GM12878 (cell line): ENCODE measurements at regions of chr10 and their contacts with region 1.

Region 1: GRCh38 chr10:88835096-88835909 is 16.3 kb downstream of the ANKRD22 start:
- DNase-seq: peak; percentile 59
- ATAC-seq: peak; percentile 96
- H3K4me3 ChIP-seq: no peak overlapping the region
- H3K27ac ChIP-seq: no peak overlapping the region
- H3K4me1 ChIP-seq: peaks cover 11% of the 10 kb centered on the region
- H3K27me3 ChIP-seq: no peaks in the 10 kb centered on the region
- CTCF ChIP-seq: peak; percentile 78 to 97 (median 91)
- EP300 ChIP-seq: no peak
- POLR2A ChIP-seq: no peak
- RAD21 ChIP-seq: peak; percentile 99

Region 2: GRCh38 chr10:88687853-88688467 is 147.3 kb before region 1 on chr10:
- CTCF ChIA-PET with region 1: interaction called, 16 read pairs
- POLR2A ChIA-PET with region 1: no interaction called
- RAD21 ChIA-PET with region 1: interaction called, 3 read pairs
- SMC1A ChIA-PET with region 1: interaction called, 7 read pairs
- in situ Hi-C with region 1: no loop called
- intact Hi-C with region 1: no loop called
- DNase-seq: no peak
- ATAC-seq: peak; percentile 53
- H3K4me3 ChIP-seq: no peak overlapping the region
- H3K27ac ChIP-seq: no peak overlapping the region
- H3K4me1 ChIP-seq: no peaks in the 10 kb centered on the region
- H3K27me3 ChIP-seq: no peaks in the 10 kb centered on the region
- CTCF ChIP-seq: peak; percentile 69 to 70 (median 70)
- EP300 ChIP-seq: no peak
- POLR2A ChIP-seq: no peak
- RAD21 ChIP-seq: peak; percentile 84

Region 3: GRCh38 chr10:88851706-88852105 is 16.4 kb after region 1 on chr10 and contains the start of gene ANKRD22:
- CTCF ChIA-PET with region 1: interaction called, 68 read pairs
- POLR2A ChIA-PET with region 1: no interaction called
- RAD21 ChIA-PET with region 1: interaction called, 11 read pairs
- SMC1A ChIA-PET with region 1: interaction called, 49 read pairs
- in situ Hi-C with region 1: no loop called
- intact Hi-C with region 1: no loop called
- DNase-seq: no peak
- ATAC-seq: peak; percentile 39; the same call in 1 of the 3 replicates
- H3K4me3 ChIP-seq: no peak within 1 kb of the TSS; the same call in 1 of the 2 replicates
- H3K27ac ChIP-seq: no peak within 1 kb of the TSS
- H3K4me1 ChIP-seq: peaks cover 4% of the 10 kb centered on the region; the same call in 1 of the 2 replicates
- H3K27me3 ChIP-seq: no peaks in the 10 kb centered on the region
- CTCF ChIP-seq: no peak
- EP300 ChIP-seq: no peak
- POLR2A ChIP-seq: no peak
- RAD21 ChIP-seq: no peak
- polyA plus RNA-seq, gene ANKRD22: 0.92 to 1.3 TPM

Region 4: DNA sequence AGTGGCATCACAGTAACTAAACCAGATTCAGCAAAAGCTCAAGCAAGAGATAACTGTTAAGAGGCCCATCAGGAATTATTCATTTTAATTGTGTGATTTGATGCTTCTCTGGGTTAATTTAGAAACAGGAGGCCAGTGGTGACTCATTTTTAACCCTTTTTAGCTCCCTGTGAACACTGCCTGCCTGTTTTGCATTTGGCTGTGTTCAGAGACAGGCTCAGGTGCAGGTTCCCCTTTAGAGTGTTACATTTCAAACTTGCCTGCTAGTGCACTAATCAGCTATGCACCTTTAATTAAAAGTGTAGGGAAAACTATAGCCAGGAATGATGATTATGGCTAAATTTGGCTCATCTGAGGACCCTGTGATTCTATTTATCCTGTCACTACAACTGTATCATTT is 51.3 kb after region 1 on chr10:
- CTCF ChIA-PET with region 1: interaction called, 72 read pairs
- POLR2A ChIA-PET with region 1: no interaction called
- RAD21 ChIA-PET with region 1: interaction called, 30 read pairs
- SMC1A ChIA-PET with region 1: interaction called, 86 read pairs
- in situ Hi-C with region 1: no loop called
- intact Hi-C with region 1: no loop called
- DNase-seq: no peak
- ATAC-seq: peak; percentile 76
- H3K4me3 ChIP-seq: peak overlapping the region; percentile 55
- H3K27ac ChIP-seq: peak overlapping the region; percentile 61
- H3K4me1 ChIP-seq: peaks cover 46% of the 10 kb centered on the region
- H3K27me3 ChIP-seq: no peaks in the 10 kb centered on the region
- CTCF ChIP-seq: no peak
- EP300 ChIP-seq: no peak
- POLR2A ChIP-seq: 0 out of 2 replicates have a peak, but pooled peaks have one; percentile 26
- RAD21 ChIP-seq: no peak

Region 5: DNA sequence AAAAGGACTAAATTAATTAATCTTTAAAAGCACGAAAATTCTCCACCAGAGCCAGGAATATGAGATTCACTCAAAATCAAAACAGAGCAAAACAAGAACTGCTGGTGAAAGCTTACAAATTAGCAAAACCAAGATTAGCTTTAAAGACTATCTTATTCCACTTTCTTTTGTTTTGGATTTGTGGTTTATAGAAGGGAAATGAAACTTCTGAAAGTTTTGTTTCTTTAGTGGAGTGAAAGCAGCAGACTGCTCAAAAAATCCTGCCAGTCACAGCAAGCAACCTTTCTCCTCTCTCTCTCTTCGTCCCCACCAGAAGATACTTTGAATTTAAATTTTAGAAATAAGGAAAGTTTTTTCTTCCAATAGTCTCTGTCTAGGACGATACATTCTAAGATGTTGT is 109.5 kb after region 1 on chr10:
- CTCF ChIA-PET with region 1: interaction called, 16 read pairs
- POLR2A ChIA-PET with region 1: interaction called, 3 read pairs
- RAD21 ChIA-PET with region 1: interaction called, 15 read pairs
- SMC1A ChIA-PET with region 1: interaction called, 6 read pairs
- in situ Hi-C with region 1: no loop called
- intact Hi-C with region 1: no loop called
- DNase-seq: no peak
- ATAC-seq: peak; percentile 91
- H3K4me3 ChIP-seq: no peak overlapping the region
- H3K27ac ChIP-seq: 0 out of 2 replicates have a peak overlapping the region, but pooled peaks have one; percentile 45
- H3K4me1 ChIP-seq: peaks cover 4% of the 10 kb centered on the region
- H3K27me3 ChIP-seq: no peaks in the 10 kb centered on the region
- CTCF ChIP-seq: no peak
- EP300 ChIP-seq: peak in 1 of 2 experiments; percentile 38; a peak in 1 of 4 replicates
- POLR2A ChIP-seq: no peak
- RAD21 ChIP-seq: no peak

Region 6: DNA sequence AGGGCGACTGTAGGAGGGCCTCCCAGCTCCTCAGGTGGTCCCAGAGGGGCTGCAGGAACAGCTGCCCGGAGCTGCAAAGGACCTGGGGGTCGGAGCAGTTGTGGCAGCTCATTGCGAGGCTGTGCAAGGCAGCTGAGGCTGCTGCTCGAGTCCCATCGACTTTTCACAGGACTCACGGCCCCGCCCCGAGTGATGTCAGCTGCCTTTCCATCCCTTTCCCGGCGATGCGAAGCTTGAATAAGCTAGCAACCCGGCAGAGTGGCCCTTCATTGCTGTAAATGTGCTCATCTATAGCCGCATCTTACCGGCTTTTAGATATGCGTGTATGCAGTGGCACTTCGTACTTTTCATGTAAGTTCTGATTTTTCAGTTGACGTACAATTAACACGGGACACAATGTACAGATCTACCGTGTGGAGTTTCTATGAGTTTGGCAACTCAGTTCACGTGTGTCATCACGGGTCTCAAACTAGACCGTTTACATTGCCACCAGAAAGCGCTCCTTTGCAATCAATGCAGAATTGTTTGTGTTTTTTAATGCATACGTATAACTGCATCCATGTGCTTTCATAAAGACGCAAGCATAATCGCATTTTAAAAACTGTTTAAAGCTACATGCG is 372.0 kb after region 1 on chr10 and contains the start of gene CH25H:
- CTCF ChIA-PET with region 1: interaction called, 11 read pairs
- POLR2A ChIA-PET with region 1: no interaction called
- RAD21 ChIA-PET with region 1: interaction called, 11 read pairs
- SMC1A ChIA-PET with region 1: interaction called, 3 read pairs
- in situ Hi-C with region 1: loop called (anchors 5 kb)
- intact Hi-C with region 1: loop called (anchors 5 kb)
- DNase-seq: no peak
- ATAC-seq: peak; percentile 59
- H3K4me3 ChIP-seq: peak within 1 kb of the TSS; percentile 66
- H3K27ac ChIP-seq: no peak within 1 kb of the TSS
- H3K4me1 ChIP-seq: peaks cover 24% of the 10 kb centered on the region
- H3K27me3 ChIP-seq: peaks cover 6 to 22% of the 10 kb centered on the region in 2 experiments
- CTCF ChIP-seq: no peak
- EP300 ChIP-seq: no peak
- POLR2A ChIP-seq: no peak
- RAD21 ChIP-seq: no peak
- polyA plus RNA-seq, gene CH25H: not detected